Testis (tissue), 5 donors: ENCODE measurements at regions of chr22 and their contacts with region 1.

Region 1: GRCh38 chr22:45268958-45269844 is 15.5 kb upstream of the UPK3A start:
- DNase-seq: peak; percentile 90
- H3K4me3 ChIP-seq: peak overlapping the region; percentile 45 to 65
- H3K27ac ChIP-seq: peak overlapping the region in 1 of 2 donors; percentile 25
- H3K4me1 ChIP-seq: peaks cover 14% of the 10 kb centered on the region
- H3K27me3 ChIP-seq: no peaks in the 10 kb centered on the region
- CTCF ChIP-seq: peak; percentile 97 to 99 (median 98)
- POLR2A ChIP-seq: no peak

Region 2: DNA sequence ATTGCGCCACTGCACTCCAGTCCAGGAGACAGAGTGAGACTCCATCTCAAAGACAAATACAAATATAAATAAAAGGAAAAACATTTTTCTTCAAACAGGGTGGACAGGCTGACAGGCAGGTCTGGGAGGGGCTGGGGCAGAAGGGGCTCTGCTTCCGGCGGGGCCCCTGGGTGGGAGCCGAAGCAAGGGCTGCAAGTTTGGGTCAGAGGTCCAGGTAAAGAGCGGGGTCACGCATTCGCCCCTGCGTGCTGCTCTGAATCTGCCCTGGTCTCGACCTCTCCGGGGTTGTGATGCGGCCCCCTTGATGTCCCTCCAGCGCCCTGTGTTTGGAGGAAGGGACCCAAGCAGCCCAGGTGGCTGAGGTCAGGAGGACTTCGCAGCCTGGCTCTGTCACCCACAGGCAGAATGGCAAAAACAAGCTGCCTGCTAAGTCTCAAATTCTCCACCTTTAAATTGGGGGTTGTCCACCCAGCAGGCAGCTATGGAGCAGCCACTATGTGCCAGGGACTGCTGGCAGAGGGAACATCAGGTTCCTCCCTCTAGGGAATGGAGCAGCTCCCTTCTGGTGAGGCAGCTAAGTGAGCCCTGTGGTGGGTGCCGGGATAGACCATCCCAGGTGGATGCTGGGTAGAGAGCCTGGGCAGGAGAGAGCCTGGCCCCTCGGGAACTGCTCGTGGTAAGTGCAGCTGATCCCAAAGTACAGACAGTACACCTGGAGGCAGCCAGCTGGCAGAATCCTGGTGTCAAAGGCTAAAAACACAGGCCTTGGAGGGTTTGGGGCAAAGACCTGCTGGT is 249.1 kb before region 1 on chr22:
- intact Hi-C with region 1: no loop called
- DNase-seq: no peak
- H3K4me3 ChIP-seq: no peak overlapping the region
- H3K27ac ChIP-seq: no peak overlapping the region
- H3K4me1 ChIP-seq: no peaks in the 10 kb centered on the region
- H3K27me3 ChIP-seq: no peaks in the 10 kb centered on the region
- CTCF ChIP-seq: no peak
- POLR2A ChIP-seq: no peak

Region 3: GRCh38 chr22:45149671-45150070 is 119.5 kb before region 1 on chr22:
- intact Hi-C with region 1: no loop called
- DNase-seq: no peak
- H3K4me3 ChIP-seq: no peak overlapping the region
- H3K27ac ChIP-seq: no peak overlapping the region
- H3K4me1 ChIP-seq: no peaks in the 10 kb centered on the region
- H3K27me3 ChIP-seq: no peaks in the 10 kb centered on the region
- CTCF ChIP-seq: no peak
- POLR2A ChIP-seq: no peak

Region 4: GRCh38 chr22:45208993-45209801 is 60.0 kb before region 1 on chr22:
- intact Hi-C with region 1: no loop called
- DNase-seq: no peak
- H3K4me3 ChIP-seq: no peak overlapping the region
- H3K27ac ChIP-seq: no peak overlapping the region
- H3K4me1 ChIP-seq: peaks cover 24% of the 10 kb centered on the region
- H3K27me3 ChIP-seq: no peaks in the 10 kb centered on the region
- CTCF ChIP-seq: peak; percentile 57 to 75 (median 68)
- POLR2A ChIP-seq: no peak

Region 5: DNA sequence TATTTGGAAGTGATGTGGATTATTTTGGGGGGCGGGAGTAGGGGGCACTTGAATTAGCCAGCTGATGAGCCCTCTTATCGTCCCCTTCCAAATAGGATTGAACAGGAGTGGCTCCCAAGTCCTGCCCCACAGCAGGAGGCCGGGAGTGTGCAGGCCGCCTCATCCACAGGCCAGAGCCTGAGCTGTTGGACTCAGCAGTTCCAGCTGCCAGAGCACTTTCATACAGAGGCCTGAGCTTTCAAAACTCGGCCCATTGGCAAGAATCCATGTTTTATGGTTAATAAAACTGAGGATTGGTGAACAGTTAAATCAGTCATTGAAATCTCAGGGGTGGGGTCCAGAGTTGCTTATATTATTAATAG is 50.1 kb after region 1 on chr22:
- intact Hi-C with region 1: no loop called
- DNase-seq: peak; percentile 50
- H3K4me3 ChIP-seq: no peak overlapping the region
- H3K27ac ChIP-seq: peak overlapping the region; percentile 78 to 89
- H3K4me1 ChIP-seq: peaks cover 32% of the 10 kb centered on the region
- H3K27me3 ChIP-seq: no peaks in the 10 kb centered on the region
- CTCF ChIP-seq: no peak
- POLR2A ChIP-seq: no peak

Region 6: DNA sequence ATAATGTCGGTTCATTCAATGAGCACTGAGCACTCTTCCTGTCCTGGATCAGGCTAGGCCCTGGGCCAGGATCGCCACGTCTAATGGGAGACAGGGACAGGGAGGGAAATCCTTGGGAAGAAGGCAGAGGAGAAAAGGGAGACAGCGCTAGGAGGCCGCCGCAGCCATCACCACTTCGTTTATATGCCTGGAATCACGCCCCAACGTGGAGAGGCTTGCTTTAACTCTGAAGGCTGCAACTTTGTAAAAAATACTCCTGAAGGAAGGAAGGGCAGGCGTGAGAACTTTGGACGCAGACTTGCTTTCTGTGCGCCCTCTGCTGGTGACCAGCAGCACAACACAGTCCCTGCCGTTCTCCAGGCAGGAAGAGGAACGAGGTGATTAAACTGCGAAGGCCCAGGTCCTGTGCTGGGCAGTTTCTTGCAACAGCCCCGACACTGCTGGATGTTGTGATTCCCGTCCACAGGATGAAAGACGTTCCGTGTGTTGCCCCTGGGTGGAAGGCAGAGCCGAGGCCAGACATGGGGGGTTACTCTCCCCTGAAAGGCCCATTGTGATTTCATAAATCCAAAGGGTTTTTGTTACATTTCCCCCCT is 166.4 kb after region 1 on chr22:
- intact Hi-C with region 1: loop called (anchors 5 kb)
- DNase-seq: peak; percentile 95
- H3K4me3 ChIP-seq: no peak overlapping the region
- H3K27ac ChIP-seq: peak overlapping the region; percentile 31 to 68
- H3K4me1 ChIP-seq: peaks cover 8% of the 10 kb centered on the region
- H3K27me3 ChIP-seq: no peaks in the 10 kb centered on the region
- CTCF ChIP-seq: peak; percentile 95 to 99 (median 99)
- POLR2A ChIP-seq: no peak